Keratinocyte (primary cell): ENCODE measurements at regions of chr3 and their contacts with region 1.

Region 1: DNA sequence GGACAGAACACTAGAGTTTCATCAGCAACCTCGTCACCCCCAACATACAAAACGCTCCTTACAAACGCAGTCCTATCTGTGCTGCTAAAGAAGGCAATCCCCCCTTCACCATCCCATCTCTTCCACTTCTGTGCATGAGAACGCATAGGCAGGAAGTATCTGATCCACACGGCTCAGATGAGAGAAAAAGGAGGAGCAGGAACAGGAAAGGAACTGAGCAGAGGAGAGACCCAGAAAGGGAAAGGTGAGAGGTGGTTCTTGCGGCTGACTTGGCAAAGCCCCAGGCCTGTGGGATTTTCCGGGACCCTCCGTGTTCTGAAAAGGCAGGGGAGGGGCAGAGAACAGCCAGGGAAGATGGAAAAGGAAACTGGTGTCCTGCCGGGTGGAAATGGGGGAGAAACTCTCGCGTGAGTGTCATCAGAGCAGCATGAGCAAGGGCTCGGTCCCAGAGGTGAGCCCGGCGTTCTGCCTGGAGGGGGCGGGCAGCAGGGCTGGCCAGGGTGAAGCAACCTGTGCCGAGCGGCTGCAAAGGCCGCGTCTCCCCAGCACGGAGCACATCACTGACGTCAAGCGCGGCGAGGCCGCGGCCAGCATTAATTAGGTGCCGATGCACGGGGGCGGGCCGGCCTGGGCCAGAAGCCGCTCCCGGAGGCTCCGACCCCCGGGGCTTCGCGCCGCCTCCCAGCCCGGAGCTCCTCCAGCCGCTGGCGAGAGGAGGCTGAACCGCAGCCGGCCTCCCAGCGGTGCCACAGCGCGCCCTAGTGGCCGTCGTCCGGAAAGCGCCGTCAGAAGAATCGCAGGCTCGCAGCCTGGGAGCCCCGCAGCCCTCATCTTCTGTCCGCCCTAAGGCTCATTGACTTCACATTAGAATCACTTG is 35.8 kb downstream of the CPN2 start:
- DNase-seq: no peak
- H3K4me3 ChIP-seq: peak overlapping the region; percentile 31 to 69 (median 54)
- H3K27ac ChIP-seq: peak overlapping the region; percentile 55
- H3K4me1 ChIP-seq: peaks cover 32% of the 10 kb centered on the region
- H3K27me3 ChIP-seq: peaks cover 21% of the 10 kb centered on the region
- CTCF ChIP-seq: peak in 2 of 3 experiments; percentile 61 to 94

Region 2: DNA sequence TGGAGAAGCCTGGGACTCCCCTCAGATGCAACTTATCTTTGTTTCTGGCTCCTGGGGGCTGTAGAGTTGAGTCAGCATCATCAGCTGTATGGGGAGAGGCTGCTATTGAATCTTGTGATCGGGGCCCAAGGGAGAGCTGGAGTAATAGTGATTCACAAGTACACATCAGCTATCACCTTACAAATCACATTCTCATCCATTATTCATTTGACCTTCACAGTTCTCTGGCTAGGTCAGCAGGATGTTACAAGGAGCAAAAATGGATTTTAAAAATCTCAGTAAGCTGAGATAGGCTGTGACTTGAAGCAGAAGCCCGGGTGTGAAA is 547.3 kb before region 1 on chr3:
- dilution Hi-C with region 1: loop called (anchors 25 kb)
- DNase-seq: no peak
- H3K4me3 ChIP-seq: no peak overlapping the region
- H3K27ac ChIP-seq: no peak overlapping the region
- H3K4me1 ChIP-seq: no peaks in the 10 kb centered on the region
- H3K27me3 ChIP-seq: peaks cover 5% of the 10 kb centered on the region
- CTCF ChIP-seq: no peak

Region 3: DNA sequence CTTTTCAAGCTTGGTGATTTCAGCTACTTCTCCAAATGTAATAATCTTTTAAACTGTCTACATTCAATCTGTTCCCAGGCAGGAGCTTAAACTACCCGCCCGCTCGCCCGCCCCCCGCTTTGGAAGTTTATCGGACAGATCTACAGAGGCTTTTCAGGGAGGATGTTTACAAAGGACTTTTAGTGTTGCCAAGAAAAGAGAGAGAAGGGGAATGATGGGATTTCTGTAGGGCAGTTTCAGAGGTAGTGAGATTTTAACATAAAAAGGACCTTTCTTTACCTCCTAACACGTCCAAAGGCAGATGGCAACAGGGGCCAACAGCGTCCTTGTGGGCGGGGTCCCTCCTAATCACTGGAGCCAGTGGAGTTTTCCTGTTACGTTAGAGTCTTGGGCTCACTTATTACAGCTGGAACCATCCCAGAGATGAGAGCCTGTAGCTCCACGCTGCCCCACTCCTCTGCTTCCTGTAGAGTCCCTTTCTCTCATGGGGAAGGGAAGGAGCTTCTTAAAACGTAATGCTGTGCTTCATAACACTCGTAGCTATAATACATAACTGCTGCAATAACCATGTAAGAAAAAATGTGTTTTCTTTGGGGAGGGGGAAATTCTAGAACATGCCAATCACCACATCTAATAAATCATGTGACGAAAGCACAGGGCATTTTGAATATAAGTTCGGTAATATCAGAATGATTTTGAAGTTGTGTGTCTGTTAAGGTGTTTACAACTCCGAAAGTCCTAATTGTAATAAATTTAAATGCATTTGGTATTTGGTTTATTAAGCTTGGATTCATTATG is 148.4 kb before region 1 on chr3:
- dilution Hi-C with region 1: loop called (anchors 25 kb)
- DNase-seq: no peak
- H3K4me3 ChIP-seq: no peak overlapping the region
- H3K27ac ChIP-seq: no peak overlapping the region
- H3K4me1 ChIP-seq: no peaks in the 10 kb centered on the region
- H3K27me3 ChIP-seq: peaks cover 8% of the 10 kb centered on the region
- CTCF ChIP-seq: no peak

Region 4: GRCh38 chr3:194250098-194251002 is 65.0 kb before region 1 on chr3:
- dilution Hi-C with region 1: no loop called
- DNase-seq: no peak
- H3K4me3 ChIP-seq: no peak overlapping the region
- H3K27ac ChIP-seq: no peak overlapping the region
- H3K4me1 ChIP-seq: no peaks in the 10 kb centered on the region
- H3K27me3 ChIP-seq: peaks cover 53% of the 10 kb centered on the region
- CTCF ChIP-seq: no peak

Region 5: GRCh38 chr3:194532591-194532990 is 217.3 kb after region 1 on chr3:
- dilution Hi-C with region 1: no loop called
- DNase-seq: no peak
- H3K4me3 ChIP-seq: no peak overlapping the region
- H3K27ac ChIP-seq: no peak overlapping the region
- H3K4me1 ChIP-seq: peaks cover 9% of the 10 kb centered on the region
- H3K27me3 ChIP-seq: no peaks in the 10 kb centered on the region
- CTCF ChIP-seq: no peak